HepG2 (cell line): ENCODE measurements at regions of chr13 and their contacts with region 1.

Region 1: DNA sequence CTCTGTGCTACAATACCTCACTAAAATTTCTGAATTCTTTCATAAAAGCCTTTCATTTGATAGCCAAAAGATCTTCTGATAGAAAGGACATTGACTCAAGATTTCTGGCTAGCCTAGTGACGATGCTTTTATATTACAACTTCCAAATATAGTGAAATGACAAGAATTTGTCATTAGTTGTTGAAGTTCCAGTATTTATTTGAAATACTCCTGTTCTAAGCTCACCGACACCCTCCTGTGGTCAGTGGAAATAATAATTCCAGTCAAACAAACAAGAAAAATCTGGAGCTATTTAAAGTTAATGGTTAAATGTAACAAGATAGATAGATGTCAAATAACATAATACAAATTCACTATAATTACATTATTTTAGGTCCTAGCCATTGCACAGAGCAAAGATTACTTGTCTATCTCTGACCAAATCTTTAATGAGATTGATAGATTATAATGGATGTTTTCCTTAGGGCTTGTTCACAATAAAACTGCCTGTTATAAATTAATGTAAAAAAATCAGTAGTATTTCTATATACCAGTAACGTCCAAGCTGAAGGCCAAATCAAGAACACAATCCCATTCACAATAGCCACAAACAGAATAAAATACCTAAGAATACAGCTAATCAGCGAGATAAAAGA is 195.5 kb downstream of the RGCC start:
- DNase-seq: peak; percentile 62
- ATAC-seq: no peak
- H3K4me3 ChIP-seq: no peak overlapping the region
- H3K27ac ChIP-seq: no peak overlapping the region
- H3K4me1 ChIP-seq: peaks cover 46% of the 10 kb centered on the region
- H3K27me3 ChIP-seq: no peaks in the 10 kb centered on the region
- CTCF ChIP-seq: peak; percentile 69
- EP300 ChIP-seq: no peak
- POLR2A ChIP-seq: no peak
- RAD21 ChIP-seq: peak; percentile 73

Region 2: GRCh38 chr13:41289463-41289881 is 363.4 kb before region 1 on chr13:
- CTCF ChIA-PET with region 1: no interaction called
- POLR2A ChIA-PET with region 1: no interaction called
- in situ Hi-C with region 1: no loop called
- intact Hi-C with region 1: loop called (anchors 1 kb)
- DNase-seq: peak; percentile 97
- ATAC-seq: peak; percentile 95
- H3K4me3 ChIP-seq: no peak overlapping the region
- H3K27ac ChIP-seq: no peak overlapping the region
- H3K4me1 ChIP-seq: peaks cover 24% of the 10 kb centered on the region
- H3K27me3 ChIP-seq: peaks cover 2 to 4% of the 10 kb centered on the region in 2 experiments; a peak in 1 of 5 replicates
- CTCF ChIP-seq: no peak
- EP300 ChIP-seq: peak; percentile 70 to 77; a peak in 3 of 4 replicates
- POLR2A ChIP-seq: no peak
- RAD21 ChIP-seq: no peak

Region 3: GRCh38 chr13:41384755-41385503 is 267.9 kb before region 1 on chr13:
- CTCF ChIA-PET with region 1: interaction called, 9 read pairs
- POLR2A ChIA-PET with region 1: no interaction called
- in situ Hi-C with region 1: no loop called
- intact Hi-C with region 1: loop called (anchors 1 kb)
- DNase-seq: no peak
- ATAC-seq: no peak
- H3K4me3 ChIP-seq: no peak overlapping the region
- H3K27ac ChIP-seq: no peak overlapping the region
- H3K4me1 ChIP-seq: no peaks in the 10 kb centered on the region
- H3K27me3 ChIP-seq: no peaks in the 10 kb centered on the region
- CTCF ChIP-seq: no peak
- EP300 ChIP-seq: no peak
- POLR2A ChIP-seq: no peak
- RAD21 ChIP-seq: no peak

Region 4: DNA sequence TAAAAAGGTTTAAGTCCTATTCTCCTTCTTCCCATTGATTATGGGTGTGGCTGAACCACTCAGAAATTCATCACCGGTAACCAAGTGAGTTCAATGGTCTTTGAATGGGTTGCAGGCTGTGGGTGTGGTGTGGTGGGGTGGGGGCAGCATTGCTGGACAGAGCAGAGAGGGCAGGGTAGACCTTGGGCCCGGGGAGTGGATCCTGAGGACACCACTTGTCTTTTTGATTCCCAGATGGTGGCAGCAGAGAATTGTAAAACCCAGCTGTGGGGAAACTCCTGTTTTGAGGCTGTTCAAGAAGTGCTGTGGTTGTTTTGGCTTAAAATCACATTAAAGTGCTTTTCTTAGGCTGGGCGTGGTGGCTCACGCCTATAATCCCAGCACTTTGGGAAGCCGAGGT is 241.3 kb before region 1 on chr13:
- CTCF ChIA-PET with region 1: interaction called, 3 read pairs
- POLR2A ChIA-PET with region 1: no interaction called
- in situ Hi-C with region 1: loop called (anchors 5 kb)
- intact Hi-C with region 1: loop called (anchors 1 kb)
- DNase-seq: peak; percentile 62
- ATAC-seq: peak; percentile 96
- H3K4me3 ChIP-seq: no peak overlapping the region
- H3K27ac ChIP-seq: no peak overlapping the region
- H3K4me1 ChIP-seq: peaks cover 12% of the 10 kb centered on the region
- H3K27me3 ChIP-seq: no peaks in the 10 kb centered on the region
- CTCF ChIP-seq: peak; percentile 78
- EP300 ChIP-seq: no peak
- POLR2A ChIP-seq: no peak
- RAD21 ChIP-seq: peak; percentile 65

Region 5: GRCh38 chr13:41546372-41547190 is 106.3 kb before region 1 on chr13:
- CTCF ChIA-PET with region 1: no interaction called
- POLR2A ChIA-PET with region 1: interaction called, 3 read pairs
- in situ Hi-C with region 1: no loop called
- intact Hi-C with region 1: loop called (anchors 5 kb)
- DNase-seq: peak; percentile 21
- ATAC-seq: peak; percentile 47
- H3K4me3 ChIP-seq: peak overlapping the region; percentile 2 to 62 (median 6)
- H3K27ac ChIP-seq: peak overlapping the region; percentile 27
- H3K4me1 ChIP-seq: peaks cover 28% of the 10 kb centered on the region
- H3K27me3 ChIP-seq: peaks cover 0 to 7% of the 10 kb centered on the region in 2 experiments; a peak in 2 of 5 replicates
- CTCF ChIP-seq: no peak
- EP300 ChIP-seq: no peak
- POLR2A ChIP-seq: no peak
- RAD21 ChIP-seq: no peak

Region 6: GRCh38 chr13:41596190-41596589 is 56.7 kb before region 1 on chr13:
- CTCF ChIA-PET with region 1: no interaction called
- POLR2A ChIA-PET with region 1: interaction called, 4 read pairs
- in situ Hi-C with region 1: no loop called
- intact Hi-C with region 1: loop called (anchors 5 kb)
- DNase-seq: no peak
- ATAC-seq: no peak
- H3K4me3 ChIP-seq: no peak overlapping the region
- H3K27ac ChIP-seq: no peak overlapping the region
- H3K4me1 ChIP-seq: peaks cover 18% of the 10 kb centered on the region
- H3K27me3 ChIP-seq: no peaks in the 10 kb centered on the region
- CTCF ChIP-seq: no peak
- EP300 ChIP-seq: no peak
- POLR2A ChIP-seq: no peak
- RAD21 ChIP-seq: no peak

Region 7: DNA sequence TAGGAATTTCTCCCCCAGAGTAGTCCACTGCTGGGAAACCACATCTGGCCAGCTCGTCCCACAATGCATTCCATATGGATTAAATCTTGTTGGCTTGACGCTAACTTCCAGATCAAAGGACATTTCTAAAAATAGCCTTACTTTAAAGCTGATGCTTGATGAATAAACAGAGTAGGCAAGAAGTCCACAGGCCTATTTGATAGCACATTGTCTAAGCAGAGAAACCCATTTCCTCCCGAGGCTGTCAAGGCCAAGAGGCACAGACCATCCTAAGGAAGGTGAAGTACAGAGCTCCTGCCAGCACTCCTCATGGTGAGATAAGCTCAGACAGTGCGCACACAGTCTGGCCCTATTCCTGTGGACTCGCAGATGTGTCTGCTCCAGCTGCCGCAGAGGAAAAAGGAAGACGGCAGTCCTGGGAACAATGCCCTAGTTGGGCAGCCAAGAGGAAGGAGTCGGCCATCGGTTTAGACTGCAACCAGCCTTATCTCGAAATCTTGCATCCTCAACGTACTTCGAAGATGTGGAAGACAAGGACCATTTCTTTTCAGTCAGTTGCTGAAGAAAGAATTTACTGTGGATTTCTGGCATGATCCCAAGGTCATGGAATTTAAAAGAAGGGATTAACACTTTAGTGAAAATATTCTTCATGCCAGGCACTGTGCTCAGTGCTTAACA is 38.7 kb before region 1 on chr13:
- CTCF ChIA-PET with region 1: no interaction called
- POLR2A ChIA-PET with region 1: interaction called, 46 read pairs
- in situ Hi-C with region 1: loop called (anchors 5 kb)
- intact Hi-C with region 1: loop called (anchors 1 kb)
- DNase-seq: peak; percentile 94
- ATAC-seq: peak; percentile 94
- H3K4me3 ChIP-seq: no peak overlapping the region
- H3K27ac ChIP-seq: peak overlapping the region; percentile 75
- H3K4me1 ChIP-seq: peaks cover 42% of the 10 kb centered on the region
- H3K27me3 ChIP-seq: no peaks in the 10 kb centered on the region; a peak in 1 of 5 replicates
- CTCF ChIP-seq: no peak
- EP300 ChIP-seq: peak in 1 of 2 experiments; percentile 86; a peak in 2 of 4 replicates
- POLR2A ChIP-seq: no peak
- RAD21 ChIP-seq: no peak

Region 8: GRCh38 chr13:42333613-42334328 is 680.9 kb after region 1 on chr13:
- CTCF ChIA-PET with region 1: no interaction called
- POLR2A ChIA-PET with region 1: no interaction called
- in situ Hi-C with region 1: no loop called
- intact Hi-C with region 1: no loop called
- DNase-seq: peak; percentile 16
- ATAC-seq: peak; percentile 97
- H3K4me3 ChIP-seq: peak overlapping the region in 1 of 3 experiments; percentile 6; a peak in 1 of 6 replicates
- H3K27ac ChIP-seq: no peak overlapping the region
- H3K4me1 ChIP-seq: no peaks in the 10 kb centered on the region
- H3K27me3 ChIP-seq: peaks cover 1 to 2% of the 10 kb centered on the region in 2 experiments; a peak in 1 of 5 replicates
- CTCF ChIP-seq: peak; percentile 57
- EP300 ChIP-seq: no peak
- POLR2A ChIP-seq: no peak
- RAD21 ChIP-seq: no peak